ENCODE measurements at regions of chr16 and their contacts with region 1.

Region 1: DNA sequence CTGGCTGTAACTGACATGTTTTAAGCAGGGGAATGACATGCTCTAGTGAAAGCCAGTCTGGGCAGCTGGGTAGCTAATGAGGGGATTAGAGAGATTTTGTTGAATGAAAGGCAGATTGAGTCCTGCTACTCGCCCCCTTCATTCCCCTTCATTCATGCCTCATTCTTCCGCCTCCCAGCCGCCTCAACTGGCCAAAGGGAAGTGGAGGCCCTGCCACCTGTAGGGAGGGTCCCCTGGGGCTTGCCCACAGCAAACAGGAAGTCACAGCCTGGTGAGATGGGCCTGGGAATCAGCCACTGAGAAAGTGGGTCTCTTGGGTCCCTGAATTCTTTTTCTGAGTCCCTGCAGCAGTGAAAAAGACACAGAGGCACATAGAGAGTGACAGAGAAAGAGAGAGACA is 1.1 kb upstream of the CD19 start:
- DNase-seq: peak; percentile 97
- H3K4me3 ChIP-seq: peak overlapping the region; percentile 78
- H3K27ac ChIP-seq: peak overlapping the region; percentile 99
- H3K4me1 ChIP-seq: peaks cover 80% of the 10 kb centered on the region
- CTCF ChIP-seq: no peak

Region 2: DNA sequence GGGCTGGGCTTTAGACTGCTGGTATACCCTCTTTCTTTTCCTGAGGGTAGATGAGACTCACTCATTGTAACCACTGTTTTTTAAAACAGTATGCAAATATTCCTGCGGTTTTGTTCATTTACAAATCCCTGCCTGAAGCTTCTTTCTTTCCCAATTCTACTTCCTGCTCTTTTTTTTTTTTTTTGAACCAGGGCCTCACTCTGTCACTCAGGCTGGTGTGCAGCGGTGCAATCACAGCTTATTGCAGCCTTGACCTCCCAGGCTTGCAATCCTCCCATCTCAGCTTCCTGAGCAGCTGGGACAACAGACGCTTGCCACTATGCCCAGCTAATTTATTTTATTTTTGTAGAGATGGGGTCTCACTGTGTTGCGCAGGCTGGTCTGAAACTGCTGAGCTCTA is 312.8 kb before region 1 on chr16:
- CTCF ChIA-PET with region 1: no interaction called
- POLR2A ChIA-PET with region 1: no interaction called
- intact Hi-C with region 1: no loop called
- DNase-seq: peak; percentile 79
- H3K4me3 ChIP-seq: peak overlapping the region; percentile 37
- H3K27ac ChIP-seq: peak overlapping the region; percentile 72
- H3K4me1 ChIP-seq: peaks cover 62% of the 10 kb centered on the region
- CTCF ChIP-seq: no peak

Region 3: GRCh38 chr16:28882551-28883160 is 48.0 kb before region 1 on chr16:
- CTCF ChIA-PET with region 1: no interaction called
- POLR2A ChIA-PET with region 1: no interaction called
- intact Hi-C with region 1: no loop called
- DNase-seq: no peak
- H3K4me3 ChIP-seq: no peak overlapping the region
- H3K27ac ChIP-seq: no peak overlapping the region
- H3K4me1 ChIP-seq: peaks cover 18% of the 10 kb centered on the region
- CTCF ChIP-seq: no peak

Region 4: DNA sequence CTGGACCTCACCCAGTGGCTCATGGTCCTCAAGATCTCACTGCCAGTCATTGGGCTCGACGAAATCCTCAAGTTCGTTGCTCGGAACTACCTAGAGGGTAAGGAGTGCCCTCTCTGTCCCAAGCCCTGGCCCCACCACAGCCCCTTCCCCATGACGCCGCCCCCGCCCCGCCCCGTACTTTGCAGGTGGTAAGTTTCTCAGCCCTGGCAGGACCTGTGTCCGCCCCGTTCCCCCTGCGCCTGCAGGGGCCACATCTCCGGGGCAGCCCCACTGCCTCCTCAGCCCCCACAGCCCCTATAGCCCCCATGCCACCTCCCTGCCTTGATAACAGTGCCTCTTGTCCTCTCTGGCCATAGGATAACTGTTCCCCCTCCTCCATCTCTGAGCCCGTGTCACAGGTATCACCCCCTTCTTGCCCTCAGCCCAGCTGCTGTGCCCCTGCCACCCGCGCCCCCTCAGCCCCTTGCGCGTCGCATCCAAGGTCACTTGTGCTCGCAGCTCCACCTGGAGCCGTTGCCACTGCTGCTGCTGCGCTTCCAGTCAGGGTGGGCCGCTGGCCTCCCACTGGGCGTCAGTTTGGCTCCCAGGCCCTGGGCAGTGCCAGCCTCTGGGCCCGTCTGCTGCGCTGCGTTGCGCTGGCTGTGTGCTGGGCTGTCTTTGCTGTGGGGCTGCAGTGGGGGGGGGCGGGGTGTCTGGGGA is 27.2 kb before region 1 on chr16:
- CTCF ChIA-PET with region 1: no interaction called
- POLR2A ChIA-PET with region 1: no interaction called
- intact Hi-C with region 1: no loop called
- DNase-seq: no peak
- H3K4me3 ChIP-seq: no peak overlapping the region
- H3K27ac ChIP-seq: no peak overlapping the region
- H3K4me1 ChIP-seq: no peaks in the 10 kb centered on the region
- CTCF ChIP-seq: no peak

Region 5: DNA sequence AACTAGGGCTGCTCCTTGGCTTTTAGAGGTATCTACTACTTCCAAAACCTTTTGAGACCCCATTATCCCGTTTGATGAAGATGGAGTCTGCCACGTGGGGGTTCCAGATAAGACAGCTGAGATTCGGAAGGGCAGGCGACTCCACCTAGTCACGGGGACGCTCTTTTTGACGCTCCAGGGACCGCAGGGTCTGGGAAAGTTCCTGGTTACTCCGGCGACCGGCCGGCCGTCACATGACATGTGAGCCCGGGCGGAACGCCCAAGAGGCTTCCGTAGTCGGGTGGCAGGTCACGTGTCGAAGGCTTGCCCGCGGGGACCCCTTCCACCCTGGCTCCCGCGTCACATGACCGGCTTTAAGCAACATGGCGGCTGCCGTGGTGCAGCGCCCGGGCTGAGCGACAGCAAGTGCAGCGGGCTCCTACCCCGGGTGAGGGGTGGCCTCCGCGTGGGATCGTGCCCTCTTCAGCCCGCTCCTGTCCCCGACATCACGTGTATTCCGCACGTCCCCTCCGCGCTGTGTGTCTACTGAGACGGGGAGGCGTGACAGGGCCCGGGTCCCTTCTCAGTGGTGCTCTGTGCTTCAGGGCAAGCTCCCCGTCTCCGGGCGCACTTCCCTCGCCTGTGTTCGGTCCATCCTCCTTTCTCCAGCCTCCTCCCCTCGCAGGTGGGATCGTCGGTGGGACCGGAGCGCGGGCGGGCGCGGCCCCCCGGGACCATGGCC is 43.9 kb after region 1 on chr16 and contains the start of gene SPNS1:
- CTCF ChIA-PET with region 1: no interaction called
- POLR2A ChIA-PET with region 1: interaction called, 3 read pairs
- intact Hi-C with region 1: loop called (anchors 1 kb)
- DNase-seq: peak; percentile 97
- H3K4me3 ChIP-seq: peak within 1 kb of the TSS; percentile 88
- H3K27ac ChIP-seq: peak within 1 kb of the TSS; percentile 39
- H3K4me1 ChIP-seq: peaks cover 15% of the 10 kb centered on the region
- CTCF ChIP-seq: no peak
- total RNA-seq, gene SPNS1: 12.4 and 20.1 TPM in 2 replicates